GM10248 (cell line): ENCODE measurements at regions of chr22 and their contacts with region 1.

Region 1: DNA sequence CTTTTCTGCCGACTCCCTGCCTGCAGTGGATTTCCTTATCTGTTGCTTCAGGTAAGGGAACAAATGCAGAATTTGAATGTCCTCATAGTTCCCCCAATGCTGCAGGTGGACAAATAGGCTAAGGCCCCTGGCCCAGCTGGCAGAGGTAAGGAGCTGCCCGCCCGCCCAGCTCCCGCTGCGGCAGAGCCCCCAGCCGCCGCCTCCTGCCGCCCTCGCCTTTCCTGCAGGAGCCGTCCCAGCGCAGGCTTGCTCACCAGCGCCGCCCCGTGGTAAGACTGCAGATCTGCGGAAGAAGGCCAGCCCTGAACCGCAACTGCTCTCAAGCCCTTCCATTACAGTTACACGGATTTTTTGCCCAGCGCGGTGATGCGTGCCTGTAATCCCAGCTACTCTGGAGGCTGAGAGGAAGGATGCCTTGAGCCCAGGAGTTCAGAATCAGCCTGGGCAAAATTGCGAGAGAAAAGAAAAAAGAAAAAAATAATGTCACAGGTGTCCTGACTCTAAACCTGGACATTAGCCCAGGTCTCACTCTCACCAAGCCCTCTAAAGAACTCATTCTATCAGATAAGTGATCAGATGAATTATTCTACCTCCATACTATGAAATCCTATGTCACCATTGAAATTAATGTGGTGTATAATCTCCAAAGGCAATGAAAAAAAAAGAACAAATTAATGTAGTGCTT is 51.2 kb upstream of the EMID1 start:
- DNase-seq: peak; percentile 88
- CTCF ChIP-seq: peak; percentile 99

Region 2: DNA sequence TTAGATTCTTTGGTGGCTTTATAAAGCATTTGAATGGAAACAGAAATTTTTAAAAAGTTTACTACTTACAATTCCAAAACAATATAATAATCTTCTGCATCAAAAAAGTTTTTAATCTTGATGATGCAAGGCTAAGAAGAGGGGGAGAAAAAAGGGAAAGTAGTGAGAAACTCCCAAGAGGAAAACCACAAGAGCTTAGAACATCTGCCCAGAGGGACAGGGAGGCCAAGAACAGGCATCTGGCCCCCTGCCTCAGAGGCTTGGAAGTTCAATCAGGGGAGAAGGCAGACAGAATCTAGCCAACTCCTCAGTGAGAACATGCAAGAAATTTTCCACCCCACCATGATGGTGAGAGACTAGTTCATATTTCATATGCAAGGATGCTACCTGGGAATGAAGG is 451.1 kb before region 1 on chr22:
- CTCF ChIA-PET with region 1: no interaction called
- POLR2A ChIA-PET with region 1: no interaction called
- DNase-seq: no peak
- CTCF ChIP-seq: no peak

Region 3: DNA sequence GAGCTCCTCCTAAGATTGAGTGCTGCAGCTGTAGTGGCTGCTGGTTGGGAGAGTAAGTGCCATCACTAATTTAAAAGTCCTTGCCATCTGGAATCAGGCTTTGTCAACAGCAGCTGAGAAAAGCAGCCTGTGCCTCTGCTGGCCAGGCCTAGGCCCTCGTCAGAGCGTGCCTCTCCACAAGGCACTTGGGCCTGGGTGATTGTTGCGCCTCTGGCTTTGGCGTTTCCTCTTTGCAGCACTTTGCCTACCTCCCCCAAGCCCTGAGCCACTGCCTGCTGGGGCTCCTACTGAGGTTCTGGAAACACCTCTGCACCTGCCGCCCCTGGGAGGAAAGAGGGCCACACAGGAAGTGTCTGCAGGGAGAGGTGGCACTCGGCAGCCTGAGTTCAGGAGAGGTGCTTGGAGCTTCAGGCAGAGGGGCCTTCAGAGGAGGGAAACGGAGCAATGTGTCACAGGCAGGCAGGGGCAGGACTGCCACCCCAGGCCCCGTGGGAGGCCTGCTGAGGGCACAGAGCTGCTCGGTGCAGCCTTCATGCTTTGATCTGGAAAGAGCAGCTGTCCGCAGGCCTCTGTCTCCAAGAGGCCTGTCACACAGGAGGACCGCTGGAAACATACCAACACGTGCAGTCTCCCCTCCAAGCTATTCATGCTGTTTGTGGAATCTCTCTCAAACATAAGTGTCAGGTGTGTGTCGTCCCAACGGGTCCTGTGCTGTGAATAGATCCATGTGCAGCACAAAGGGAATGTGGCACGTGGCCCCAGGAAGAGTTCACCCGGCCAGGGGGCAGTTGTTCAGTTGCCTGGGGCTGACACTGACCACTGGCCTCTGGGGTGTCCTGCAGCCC is 10.3 kb before region 1 on chr22:
- CTCF ChIA-PET with region 1: interaction called, 29 read pairs
- POLR2A ChIA-PET with region 1: no interaction called
- DNase-seq: no peak
- CTCF ChIP-seq: no peak

Region 4: DNA sequence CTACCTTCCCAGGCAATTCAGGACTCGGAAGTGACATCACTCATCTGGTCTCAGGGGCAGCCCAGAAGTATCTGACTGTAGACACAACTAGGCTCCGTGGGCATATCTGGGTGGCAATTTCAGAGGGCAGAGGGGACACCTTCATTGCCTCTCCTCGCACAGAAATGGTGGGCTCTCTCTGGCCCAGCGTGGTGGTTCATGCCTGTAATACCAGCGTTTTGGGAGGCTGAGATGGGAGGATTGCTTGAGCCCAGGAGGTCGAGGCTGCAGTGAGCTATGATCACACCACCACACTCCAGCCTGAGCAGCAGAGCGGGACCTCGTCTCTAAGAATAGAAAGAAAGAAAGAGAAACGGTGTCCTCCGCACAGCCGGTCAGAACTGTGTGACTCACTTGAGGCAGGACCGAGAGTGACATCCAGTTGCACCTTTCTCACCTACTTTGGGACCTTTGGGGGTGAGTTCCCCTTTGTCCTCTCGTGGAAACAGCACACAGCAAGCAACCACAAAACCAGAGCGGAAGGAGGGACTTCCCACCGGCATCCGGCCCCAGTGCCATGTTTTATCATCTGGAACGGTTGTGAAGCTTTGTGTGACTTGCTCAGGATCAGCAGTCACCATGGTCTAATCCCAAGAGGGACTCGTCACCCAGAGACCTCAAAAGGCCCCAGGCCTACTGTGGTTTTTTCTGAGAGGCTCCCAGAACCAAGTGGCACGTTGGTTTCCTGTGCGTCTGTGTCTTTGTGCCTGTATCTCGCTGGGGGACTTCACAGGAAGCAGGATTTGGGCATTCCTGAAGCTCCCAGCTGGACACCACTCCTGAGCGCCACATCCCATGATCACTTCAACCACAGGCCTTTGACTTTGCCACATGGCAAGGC is 12.8 kb after region 1 on chr22:
- CTCF ChIA-PET with region 1: interaction called, 14 read pairs
- POLR2A ChIA-PET with region 1: no interaction called
- DNase-seq: peak; percentile 89
- CTCF ChIP-seq: no peak